SK-N-SH (cell line): ENCODE measurements at regions of chr3 and their contacts with region 1.

Region 1: DNA sequence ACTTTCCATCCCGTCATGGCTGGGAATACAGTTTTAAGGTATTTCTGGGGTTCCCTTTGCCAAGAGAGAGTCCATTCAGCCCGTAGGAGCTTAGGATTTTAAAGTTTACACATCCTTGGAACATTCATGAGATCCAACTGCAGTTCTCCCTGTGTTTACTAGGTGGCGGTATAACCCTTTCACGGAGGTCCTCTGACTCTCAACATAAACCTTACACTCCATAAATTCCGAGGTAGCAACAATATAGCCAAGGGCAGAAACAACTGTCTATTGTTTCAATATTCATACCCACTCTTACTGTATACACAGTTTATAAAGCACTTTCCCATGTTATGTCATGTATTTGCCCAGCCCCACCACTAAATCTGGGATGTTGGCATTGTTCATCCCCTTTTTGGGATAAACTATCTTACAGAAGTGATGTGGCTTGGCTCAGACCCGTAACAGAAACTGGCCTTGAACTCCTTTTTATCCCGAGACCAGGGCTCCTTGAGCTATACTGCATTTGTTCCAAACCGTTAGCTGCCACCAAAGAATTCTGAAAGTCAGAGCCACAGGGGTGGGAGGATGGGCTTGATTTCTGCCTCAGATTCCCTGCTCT is 69.2 kb upstream of the COL6A5 start:
- DNase-seq: peak; percentile 65
- H3K4me3 ChIP-seq: peak overlapping the region in 1 of 2 experiments; percentile 28; a peak in 1 of 4 replicates
- H3K27ac ChIP-seq: no peak overlapping the region
- H3K4me1 ChIP-seq: no peaks in the 10 kb centered on the region; a peak in 1 of 4 replicates
- H3K27me3 ChIP-seq: no peaks in the 10 kb centered on the region
- CTCF ChIP-seq: peak; percentile 82
- EP300 ChIP-seq: no peak
- RAD21 ChIP-seq: peak; percentile 93

Region 2: DNA sequence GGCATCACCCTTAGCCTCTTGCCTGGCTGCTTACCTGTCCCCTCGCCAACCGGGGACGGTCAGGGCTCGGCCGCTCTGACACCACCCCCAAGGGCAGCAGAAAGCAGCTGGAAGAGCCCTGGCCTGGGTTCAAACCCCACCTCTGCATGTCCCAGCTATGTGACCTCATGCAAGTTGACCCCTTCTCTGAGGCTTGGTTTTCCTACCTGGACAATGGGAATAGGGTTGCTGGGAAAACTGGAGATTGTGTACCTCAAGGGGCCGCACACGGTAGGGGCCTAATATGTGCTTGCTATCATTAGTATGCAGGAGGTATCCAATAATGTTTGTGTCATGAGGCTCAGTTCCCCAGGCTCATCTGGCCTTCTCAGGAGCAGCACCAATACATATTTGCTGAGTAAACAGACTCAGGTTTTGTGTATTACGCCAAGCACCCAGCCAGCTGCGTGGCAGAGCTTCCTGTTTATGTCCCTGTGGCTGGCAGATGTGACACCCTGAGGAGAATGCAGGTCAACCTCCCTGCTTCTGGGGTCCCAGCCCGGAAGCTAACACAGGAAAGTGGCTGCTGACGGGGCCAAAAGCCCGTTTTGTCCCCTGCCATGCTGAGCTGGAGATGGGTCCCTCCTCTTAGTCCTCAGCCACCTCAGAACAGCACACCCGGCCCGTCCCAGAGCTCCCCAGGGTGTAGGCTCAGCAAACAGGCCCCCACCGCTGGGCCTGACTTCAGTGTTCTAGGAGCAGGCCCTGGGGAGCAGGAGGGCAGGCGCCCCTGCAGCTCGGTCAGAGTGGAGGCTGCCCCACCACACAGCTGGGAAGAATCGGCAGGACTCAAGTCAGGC is 699.6 kb before region 1 on chr3:
- CTCF ChIA-PET with region 1: no interaction called
- POLR2A ChIA-PET with region 1: no interaction called
- DNase-seq: no peak
- H3K4me3 ChIP-seq: no peak overlapping the region
- H3K27ac ChIP-seq: no peak overlapping the region; a peak in 1 of 4 replicates
- H3K4me1 ChIP-seq: peaks cover 0 to 10% of the 10 kb centered on the region in 2 experiments; a peak in 1 of 4 replicates
- H3K27me3 ChIP-seq: no peaks in the 10 kb centered on the region
- CTCF ChIP-seq: no peak
- EP300 ChIP-seq: no peak
- RAD21 ChIP-seq: no peak

Region 3: DNA sequence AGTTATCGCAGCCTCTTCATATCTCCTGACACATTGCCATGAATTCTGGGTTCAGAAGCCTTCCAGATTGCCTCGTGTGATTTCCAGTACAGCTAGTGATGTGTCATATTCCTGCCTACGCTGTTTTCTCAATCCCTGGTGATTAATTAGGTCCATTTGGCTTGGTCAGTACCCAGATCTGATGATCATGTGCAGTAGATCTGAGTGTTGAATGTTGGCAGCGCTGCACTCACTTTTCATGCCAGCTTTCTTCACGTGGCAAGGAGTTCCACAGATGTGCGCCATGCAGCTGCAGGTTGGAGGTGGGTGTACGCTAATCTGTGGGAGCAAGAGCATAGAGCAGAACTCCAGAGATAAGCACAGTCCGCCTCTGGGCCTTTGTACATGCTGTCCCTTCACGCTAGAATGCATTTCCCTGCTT is 17.8 kb before region 1 on chr3:
- CTCF ChIA-PET with region 1: interaction called, 15 read pairs
- POLR2A ChIA-PET with region 1: no interaction called
- DNase-seq: no peak
- H3K4me3 ChIP-seq: no peak overlapping the region
- H3K27ac ChIP-seq: no peak overlapping the region
- H3K4me1 ChIP-seq: no peaks in the 10 kb centered on the region; a peak in 1 of 4 replicates
- H3K27me3 ChIP-seq: no peaks in the 10 kb centered on the region
- CTCF ChIP-seq: no peak
- EP300 ChIP-seq: no peak
- RAD21 ChIP-seq: no peak

Region 4: GRCh38 chr3:130328591-130328990 is 52.3 kb after region 1 on chr3:
- CTCF ChIA-PET with region 1: interaction called, 11 read pairs
- POLR2A ChIA-PET with region 1: no interaction called
- DNase-seq: no peak
- H3K4me3 ChIP-seq: no peak overlapping the region
- H3K27ac ChIP-seq: no peak overlapping the region
- H3K4me1 ChIP-seq: no peaks in the 10 kb centered on the region
- H3K27me3 ChIP-seq: no peaks in the 10 kb centered on the region
- CTCF ChIP-seq: no peak
- EP300 ChIP-seq: no peak
- RAD21 ChIP-seq: no peak

Region 5: DNA sequence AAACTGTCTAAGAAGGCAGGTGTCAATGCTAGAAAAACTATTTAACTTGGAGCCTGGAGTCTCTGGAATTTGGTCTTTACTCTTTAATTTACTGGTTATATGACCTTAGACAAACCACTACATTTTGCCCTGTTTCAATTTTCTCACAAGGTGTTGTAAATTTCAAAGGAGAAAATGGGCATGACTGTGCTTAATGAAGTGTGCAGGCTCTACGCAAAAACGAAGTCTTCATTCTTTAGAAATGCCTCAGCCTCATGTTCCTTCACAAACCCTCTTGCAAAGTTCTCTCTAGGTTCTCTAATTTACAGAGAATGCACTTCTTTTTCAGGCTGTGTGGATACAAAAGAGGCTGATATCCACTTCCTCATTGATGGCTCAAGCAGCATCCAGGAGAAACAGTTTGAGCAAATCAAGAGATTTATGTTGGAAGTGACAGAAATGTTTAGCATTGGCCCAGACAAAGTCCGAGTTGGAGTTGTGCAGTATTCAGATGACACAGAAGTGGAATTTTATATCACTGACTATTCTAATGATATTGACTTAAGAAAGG is 108.2 kb after region 1 on chr3:
- CTCF ChIA-PET with region 1: no interaction called
- POLR2A ChIA-PET with region 1: no interaction called
- DNase-seq: no peak
- H3K4me3 ChIP-seq: no peak overlapping the region
- H3K27ac ChIP-seq: no peak overlapping the region
- H3K4me1 ChIP-seq: no peaks in the 10 kb centered on the region
- H3K27me3 ChIP-seq: no peaks in the 10 kb centered on the region
- CTCF ChIP-seq: no peak
- EP300 ChIP-seq: no peak
- RAD21 ChIP-seq: no peak

Region 6: DNA sequence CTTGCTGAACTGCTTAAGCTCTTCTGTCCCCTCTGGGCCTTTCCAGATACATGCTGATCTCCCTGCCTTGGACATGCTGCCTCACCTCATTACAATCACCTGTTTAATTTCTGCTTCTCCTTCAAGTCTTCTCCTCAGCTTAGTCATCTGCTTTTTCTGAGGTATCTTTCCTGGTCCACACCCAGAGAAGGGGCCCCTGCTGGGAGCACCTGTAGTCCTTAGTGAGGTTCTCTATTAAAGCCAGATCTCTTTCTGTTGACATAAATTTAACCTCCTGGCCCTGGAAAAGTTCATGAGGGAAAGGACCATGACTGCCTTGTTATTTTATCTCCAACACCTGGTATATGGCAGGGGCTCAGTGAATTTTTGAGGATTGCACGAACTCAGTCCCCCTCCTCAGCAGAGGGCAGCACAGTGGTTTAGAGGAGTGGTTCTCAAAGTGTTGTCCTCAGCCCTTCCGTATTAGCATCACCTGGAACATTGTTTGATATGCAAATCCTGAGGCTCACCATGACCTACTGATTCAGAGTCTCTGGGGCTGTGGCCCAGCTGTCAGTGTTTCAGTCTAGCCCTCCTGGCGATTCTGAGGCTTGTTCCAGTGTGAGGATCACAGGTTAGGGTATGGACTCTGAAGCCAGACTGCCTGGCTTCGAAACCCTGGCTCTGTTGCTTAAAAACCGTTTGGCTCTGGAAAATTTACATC is 253.4 kb after region 1 on chr3:
- CTCF ChIA-PET with region 1: interaction called, 15 read pairs
- POLR2A ChIA-PET with region 1: no interaction called
- DNase-seq: no peak
- H3K4me3 ChIP-seq: no peak overlapping the region
- H3K27ac ChIP-seq: no peak overlapping the region
- H3K4me1 ChIP-seq: no peaks in the 10 kb centered on the region; a peak in 1 of 4 replicates
- H3K27me3 ChIP-seq: no peaks in the 10 kb centered on the region
- CTCF ChIP-seq: no peak
- EP300 ChIP-seq: no peak
- RAD21 ChIP-seq: no peak

Region 7: GRCh38 chr3:130546920-130547679 is 270.8 kb after region 1 on chr3:
- CTCF ChIA-PET with region 1: interaction called, 17 read pairs
- POLR2A ChIA-PET with region 1: no interaction called
- DNase-seq: no peak
- H3K4me3 ChIP-seq: no peak overlapping the region
- H3K27ac ChIP-seq: no peak overlapping the region
- H3K4me1 ChIP-seq: no peaks in the 10 kb centered on the region
- H3K27me3 ChIP-seq: no peaks in the 10 kb centered on the region
- CTCF ChIP-seq: no peak
- EP300 ChIP-seq: no peak
- RAD21 ChIP-seq: no peak

Region 8: DNA sequence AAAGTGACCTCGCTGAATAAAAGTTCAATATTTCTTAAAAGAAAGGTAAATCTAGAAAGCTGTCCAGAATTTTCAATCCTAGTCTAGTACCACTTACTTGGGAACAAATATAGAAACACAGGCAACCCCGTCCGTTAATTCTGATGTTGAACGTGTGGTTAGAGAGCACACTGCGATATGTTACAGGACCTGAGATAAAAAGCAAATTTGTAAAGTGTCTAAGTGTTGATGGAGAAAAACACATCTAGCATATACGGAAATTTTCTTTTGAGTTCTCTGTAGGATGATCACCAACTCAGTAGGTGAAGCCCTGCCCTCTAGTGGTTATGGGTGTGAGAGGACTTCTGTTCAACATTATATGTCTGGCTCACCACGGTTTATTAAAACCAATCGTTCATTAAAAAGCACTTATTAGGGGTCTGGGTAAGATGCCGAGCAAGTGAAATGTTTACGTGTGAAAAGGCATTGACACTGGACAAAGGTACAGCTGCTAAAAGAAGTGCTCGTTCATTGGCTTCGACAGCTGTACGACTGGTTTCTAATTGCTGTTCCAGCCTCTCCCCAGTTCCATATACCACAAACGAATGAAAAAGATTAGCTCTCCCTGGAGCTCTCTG is 616.6 kb after region 1 on chr3:
- CTCF ChIA-PET with region 1: interaction called, 11 read pairs
- POLR2A ChIA-PET with region 1: no interaction called
- DNase-seq: peak; percentile 70
- H3K4me3 ChIP-seq: peak overlapping the region; percentile 87 to 97
- H3K27ac ChIP-seq: peak overlapping the region; percentile 91 to 94
- H3K4me1 ChIP-seq: peaks cover 2 to 5% of the 10 kb centered on the region in 2 experiments; a peak in 3 of 4 replicates
- H3K27me3 ChIP-seq: no peaks in the 10 kb centered on the region
- CTCF ChIP-seq: peak; percentile 95
- EP300 ChIP-seq: no peak
- RAD21 ChIP-seq: peak; percentile 89